ENCODE measurements at regions of chr2 and their contacts with region 1.

Region 1: DNA sequence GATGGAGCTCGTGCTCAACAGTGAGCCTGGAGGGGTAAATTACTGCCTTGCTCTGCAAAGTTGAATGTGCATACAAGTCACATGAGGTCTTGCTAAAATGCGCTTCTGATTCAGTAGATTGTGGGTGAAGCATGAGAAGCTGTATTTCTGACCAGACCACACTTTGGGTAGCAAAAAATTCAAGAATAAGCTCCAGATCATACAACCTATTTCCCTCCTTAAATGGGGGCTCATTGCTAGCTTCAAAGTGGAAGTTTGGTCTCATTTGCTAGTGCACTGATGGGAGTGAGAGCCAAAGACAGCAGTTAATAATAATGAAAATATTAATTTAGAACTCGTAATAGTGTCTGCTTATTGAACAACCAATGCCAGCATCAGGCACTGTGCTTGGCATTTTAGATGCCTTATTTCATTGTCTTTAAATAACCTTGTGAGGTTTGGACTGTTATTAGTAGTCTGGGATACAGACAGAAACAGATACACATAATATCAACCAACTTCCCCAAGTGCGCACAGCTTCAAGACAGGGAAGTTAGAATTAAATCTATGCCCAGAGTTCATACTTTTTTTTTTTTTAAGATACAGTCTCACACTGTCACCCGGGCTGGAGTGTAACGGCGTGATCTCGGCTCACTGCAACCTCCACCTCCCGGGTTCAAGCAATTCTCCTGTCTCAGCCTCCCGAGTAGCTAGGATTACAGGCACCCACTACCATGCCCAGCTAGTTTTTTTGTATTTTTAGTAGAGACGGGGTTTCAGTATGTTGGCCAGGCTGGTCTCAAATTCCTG is 18.0 kb downstream of the APOB start:
- DNase-seq: no peak
- ATAC-seq: peak; percentile 1
- H3K4me3 ChIP-seq: no peak overlapping the region
- H3K27ac ChIP-seq: peak overlapping the region; percentile 31
- H3K4me1 ChIP-seq: peaks cover 92% of the 10 kb centered on the region
- H3K27me3 ChIP-seq: no peaks in the 10 kb centered on the region
- CTCF ChIP-seq: no peak
- EP300 ChIP-seq: no peak
- POLR2A ChIP-seq: peak; percentile 63 to 72
- RAD21 ChIP-seq: no peak

Region 2: DNA sequence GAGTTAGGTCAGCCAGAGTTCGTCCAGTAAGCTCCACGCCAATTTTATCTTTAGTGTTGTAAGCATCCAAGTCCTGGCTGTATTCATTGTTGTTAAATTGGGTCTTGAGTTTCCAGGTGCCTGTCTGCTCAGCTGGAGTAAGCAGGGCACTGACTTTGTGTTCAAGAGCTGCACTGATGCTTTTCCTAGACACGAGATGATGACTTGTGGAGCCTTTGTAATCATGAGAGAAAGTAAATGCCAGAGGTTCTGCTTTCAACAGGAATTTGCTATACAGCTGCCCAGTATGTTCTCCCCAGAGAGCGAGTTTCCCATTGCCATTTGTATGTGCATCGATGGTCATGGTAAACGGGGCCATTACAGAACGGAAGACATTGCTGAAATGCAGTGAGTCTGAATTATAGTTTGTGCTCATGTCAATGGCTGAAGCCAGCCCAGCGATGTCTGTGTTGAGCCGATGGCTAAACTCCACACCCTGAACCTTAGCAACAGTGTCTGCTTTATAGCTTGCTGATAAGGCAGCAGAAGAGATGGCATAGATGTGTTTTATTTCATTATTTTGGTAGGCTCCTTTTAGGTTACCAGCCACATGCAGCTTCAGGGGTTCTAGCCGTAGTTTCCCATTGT is 15.0 kb before region 1 on chr2:
- CTCF ChIA-PET with region 1: no interaction called
- POLR2A ChIA-PET with region 1: interaction called, 119 read pairs
- in situ Hi-C with region 1: no loop called
- intact Hi-C with region 1: no loop called
- DNase-seq: no peak
- ATAC-seq: peak; percentile 0; the same call in 1 of the 3 replicates
- H3K4me3 ChIP-seq: no peak overlapping the region
- H3K27ac ChIP-seq: no peak overlapping the region
- H3K4me1 ChIP-seq: peaks cover 30% of the 10 kb centered on the region
- H3K27me3 ChIP-seq: no peaks in the 10 kb centered on the region
- CTCF ChIP-seq: no peak
- EP300 ChIP-seq: no peak
- POLR2A ChIP-seq: peak; percentile 57 to 74; a peak in 3 of 4 replicates
- RAD21 ChIP-seq: no peak

Region 3: GRCh38 chr2:21118302-21118920 is 92.5 kb after region 1 on chr2:
- CTCF ChIA-PET with region 1: no interaction called
- POLR2A ChIA-PET with region 1: interaction called, 15 read pairs
- in situ Hi-C with region 1: no loop called
- intact Hi-C with region 1: no loop called
- DNase-seq: peak; percentile 81
- ATAC-seq: peak; percentile 98
- H3K4me3 ChIP-seq: no peak overlapping the region
- H3K27ac ChIP-seq: no peak overlapping the region
- H3K4me1 ChIP-seq: peaks cover 22% of the 10 kb centered on the region
- H3K27me3 ChIP-seq: no peaks in the 10 kb centered on the region
- CTCF ChIP-seq: peak; percentile 89
- EP300 ChIP-seq: peak in 1 of 2 experiments; percentile 36; a peak in 1 of 4 replicates
- POLR2A ChIP-seq: no peak
- RAD21 ChIP-seq: peak; percentile 91

Region 4: DNA sequence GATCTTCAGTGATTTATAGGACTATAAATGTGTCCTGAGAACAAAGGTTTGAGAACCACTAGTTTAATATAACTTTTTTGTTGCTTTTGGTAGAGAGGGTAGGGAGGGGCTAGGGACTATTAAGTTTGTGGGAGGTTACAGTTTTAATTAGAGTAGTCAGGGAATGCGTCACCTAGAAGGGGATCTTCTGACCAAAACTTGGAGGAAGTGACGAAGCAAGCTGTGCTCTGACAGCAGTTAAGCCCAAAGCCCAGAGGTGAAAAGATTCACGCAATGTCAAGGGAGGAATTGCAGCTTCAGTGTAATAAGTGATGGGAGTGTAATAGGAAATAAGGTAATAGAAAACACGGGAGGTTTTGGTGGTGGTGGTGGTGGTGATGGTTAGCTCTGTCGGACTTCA is 106.0 kb after region 1 on chr2:
- CTCF ChIA-PET with region 1: no interaction called
- POLR2A ChIA-PET with region 1: no interaction called
- in situ Hi-C with region 1: no loop called
- intact Hi-C with region 1: no loop called
- DNase-seq: no peak
- ATAC-seq: no peak
- H3K4me3 ChIP-seq: no peak overlapping the region
- H3K27ac ChIP-seq: no peak overlapping the region
- H3K4me1 ChIP-seq: peaks cover 2% of the 10 kb centered on the region
- H3K27me3 ChIP-seq: no peaks in the 10 kb centered on the region; a peak in 1 of 5 replicates
- CTCF ChIP-seq: no peak
- EP300 ChIP-seq: no peak
- POLR2A ChIP-seq: no peak
- RAD21 ChIP-seq: no peak